ENCODE measurements at regions of chr1 and their contacts with region 1.

Region 1: DNA sequence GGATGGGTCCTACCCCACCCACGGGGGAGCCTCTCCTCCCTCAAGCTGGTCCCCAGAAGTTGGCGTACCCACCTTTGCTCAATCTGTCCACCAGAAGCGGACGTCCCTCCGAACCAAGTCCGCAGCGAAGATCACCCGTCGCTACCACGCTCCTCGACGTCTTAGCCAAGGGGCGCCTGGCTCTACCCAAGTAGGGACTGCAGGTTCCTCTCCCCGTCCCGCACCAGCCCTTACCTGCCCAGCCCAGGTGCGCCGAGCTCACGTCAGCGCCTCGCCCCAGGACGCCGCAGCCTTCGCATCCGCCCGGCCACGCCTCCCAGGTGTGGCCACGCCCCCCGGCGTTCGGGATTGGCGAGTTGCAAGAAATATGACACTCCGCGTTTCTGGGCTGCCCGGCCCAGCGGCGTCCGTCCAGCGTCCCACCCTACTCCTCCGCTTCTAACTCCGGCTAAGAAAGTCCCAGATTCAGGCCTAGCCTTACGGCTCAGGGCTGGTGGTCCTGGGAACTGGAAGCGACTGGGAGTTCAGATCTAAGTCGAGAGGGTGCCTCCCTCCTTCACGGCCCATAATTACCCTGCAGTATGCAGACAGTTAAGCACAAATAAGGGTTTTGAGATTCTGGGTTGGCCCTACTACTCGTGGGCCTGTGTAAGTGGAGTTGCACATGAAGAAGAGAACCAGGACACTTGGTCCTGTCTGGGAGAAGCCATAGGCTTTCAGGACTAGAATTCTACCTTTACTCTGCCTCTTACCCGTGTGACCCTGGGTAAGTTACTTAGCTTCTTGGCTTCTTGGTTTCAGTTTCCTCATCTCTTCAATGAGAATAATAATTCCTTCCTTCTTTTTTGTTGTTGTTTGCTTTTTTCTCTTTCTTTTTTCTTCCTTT is at the start of gene IRF6:
- DNase-seq: peak; percentile 93 to 98
- H3K4me3 ChIP-seq: peak within 1 kb of the TSS; percentile 73 to 91 (median 80)
- H3K27ac ChIP-seq: peak within 1 kb of the TSS; percentile 66; the same call in 1 of the 2 replicates
- H3K4me1 ChIP-seq: peaks cover 0 to 7% (median 0%) of the 10 kb centered on the region in 4 experiments; a peak in 4 of 7 replicates
- H3K27me3 ChIP-seq: no peaks in the 10 kb centered on the region
- CTCF ChIP-seq: no peak
- EP300 ChIP-seq: no peak
- POLR2A ChIP-seq: peak; percentile 81 to 85
- RAD21 ChIP-seq: no peak
- total RNA-seq, gene IRF6: 13.3 and 13.4 TPM in 2 replicates

Region 2: GRCh38 chr1:209769171-209769904 is 36.8 kb before region 1 on chr1:
- CTCF ChIA-PET with region 1: no interaction called
- POLR2A ChIA-PET with region 1: no interaction called
- DNase-seq: no peak
- H3K4me3 ChIP-seq: no peak overlapping the region
- H3K27ac ChIP-seq: no peak overlapping the region
- H3K4me1 ChIP-seq: no peaks in the 10 kb centered on the region; a peak in 1 of 7 replicates
- H3K27me3 ChIP-seq: peaks cover 0 to 2% (median 0%) of the 10 kb centered on the region in 4 experiments; a peak in 1 of 7 replicates
- CTCF ChIP-seq: no peak
- EP300 ChIP-seq: no peak
- POLR2A ChIP-seq: no peak
- RAD21 ChIP-seq: no peak

Region 3: GRCh38 chr1:209784265-209785169 is 21.6 kb before region 1 on chr1 and contains the start of gene C1orf74:
- CTCF ChIA-PET with region 1: no interaction called
- POLR2A ChIA-PET with region 1: interaction called, 11 read pairs
- DNase-seq: peak; percentile 95 to 100
- H3K4me3 ChIP-seq: peak within 1 kb of the TSS; percentile 69 to 94 (median 78)
- H3K27ac ChIP-seq: peak within 1 kb of the TSS; percentile 77
- H3K4me1 ChIP-seq: peaks cover 0 to 6% (median 2%) of the 10 kb centered on the region in 4 experiments; a peak in 2 of 7 replicates
- H3K27me3 ChIP-seq: no peaks in the 10 kb centered on the region
- CTCF ChIP-seq: no peak
- EP300 ChIP-seq: peak in 1 of 2 experiments; percentile 54; a peak in 1 of 3 replicates
- POLR2A ChIP-seq: peak; percentile 92 to 96
- RAD21 ChIP-seq: no peak; a peak in 1 of 4 replicates
- total RNA-seq, gene C1orf74: 3.9 and 4.1 TPM in 2 replicates

Region 4: DNA sequence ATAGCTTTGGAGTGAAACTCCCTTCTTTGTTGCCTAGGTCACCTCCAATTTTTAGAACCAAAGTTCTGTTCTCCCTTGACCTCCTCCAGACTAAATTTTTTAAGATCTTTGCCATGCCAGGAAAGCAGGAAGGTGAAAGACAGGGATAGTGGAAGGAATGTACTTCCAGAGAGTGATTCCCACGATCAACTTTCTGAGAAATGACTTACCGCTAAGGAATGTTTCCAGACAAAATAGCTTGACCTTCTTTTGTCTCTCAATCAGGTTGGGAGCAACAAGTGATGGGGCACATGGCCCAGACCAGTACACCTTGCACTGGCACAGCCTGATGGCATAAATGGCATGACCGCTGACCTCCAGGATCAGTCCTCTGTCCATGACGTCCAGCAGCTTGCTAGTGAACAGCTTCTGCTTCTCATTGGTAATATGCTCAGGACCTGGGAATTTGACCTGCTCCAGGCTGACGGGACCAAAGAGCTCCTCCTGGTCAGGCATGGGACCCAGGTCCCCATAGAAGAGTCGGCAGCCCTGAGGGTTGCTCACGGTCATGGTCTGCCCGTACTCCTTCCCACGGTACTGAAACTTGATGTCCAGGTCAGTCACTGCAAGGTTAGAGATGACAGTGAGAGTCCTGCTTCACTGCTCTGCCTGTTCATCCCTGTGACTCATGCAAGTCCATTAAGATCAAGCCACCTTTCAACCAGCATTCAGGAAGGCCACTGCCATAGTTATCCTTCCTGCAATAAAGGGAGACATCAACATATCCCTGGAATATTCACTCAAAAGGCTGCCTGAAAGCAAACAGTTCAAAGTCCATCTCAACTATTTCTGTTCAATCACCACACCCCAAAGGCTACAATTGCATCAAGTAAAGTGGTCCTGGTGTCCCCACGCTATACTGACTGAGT is 15.6 kb before region 1 on chr1:
- CTCF ChIA-PET with region 1: interaction called, 13 read pairs
- POLR2A ChIA-PET with region 1: interaction called, 11 read pairs
- DNase-seq: no peak
- H3K4me3 ChIP-seq: no peak overlapping the region
- H3K27ac ChIP-seq: no peak overlapping the region
- H3K4me1 ChIP-seq: no peaks in the 10 kb centered on the region
- H3K27me3 ChIP-seq: no peaks in the 10 kb centered on the region
- CTCF ChIP-seq: no peak
- EP300 ChIP-seq: no peak
- POLR2A ChIP-seq: no peak
- RAD21 ChIP-seq: no peak

Region 5: DNA sequence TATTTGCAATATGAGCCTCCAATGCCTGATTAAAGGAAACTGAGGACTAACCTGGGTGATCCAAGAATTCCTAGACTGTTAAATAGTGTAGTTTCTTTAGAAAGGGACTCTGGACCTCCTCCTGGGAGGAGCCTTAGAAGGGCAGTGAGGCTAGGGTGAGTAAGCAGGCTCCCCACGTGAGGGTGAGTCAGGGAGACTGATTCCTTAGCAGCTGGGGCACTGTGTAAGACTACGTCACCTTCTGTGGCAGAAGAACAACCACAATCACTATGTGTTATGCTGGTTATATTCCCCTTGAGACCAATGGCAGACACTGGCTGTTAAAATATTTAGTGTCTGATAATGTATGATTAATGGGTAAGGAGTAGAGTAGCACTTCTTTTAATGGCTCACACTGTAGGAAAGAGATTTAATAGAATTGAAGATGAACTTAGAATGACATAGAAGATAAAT is 78.6 kb after region 1 on chr1:
- CTCF ChIA-PET with region 1: no interaction called
- POLR2A ChIA-PET with region 1: no interaction called
- DNase-seq: no peak
- H3K4me3 ChIP-seq: no peak overlapping the region
- H3K27ac ChIP-seq: no peak overlapping the region
- H3K4me1 ChIP-seq: no peaks in the 10 kb centered on the region; a peak in 1 of 7 replicates
- H3K27me3 ChIP-seq: no peaks in the 10 kb centered on the region
- CTCF ChIP-seq: no peak
- EP300 ChIP-seq: no peak
- POLR2A ChIP-seq: no peak
- RAD21 ChIP-seq: no peak

Measured in H1 (cell line).